ENCODE measurements at regions of chr2 and their contacts with region 1.

Region 1: GRCh38 chr2:231900486-231900942 is 25.7 kb downstream of the NPPC start:
- DNase-seq: peak; percentile 80
- H3K4me3 ChIP-seq: no peak overlapping the region
- H3K27ac ChIP-seq: no peak overlapping the region
- H3K4me1 ChIP-seq: no peaks in the 10 kb centered on the region
- H3K27me3 ChIP-seq: peaks cover 32% of the 10 kb centered on the region

Region 2: DNA sequence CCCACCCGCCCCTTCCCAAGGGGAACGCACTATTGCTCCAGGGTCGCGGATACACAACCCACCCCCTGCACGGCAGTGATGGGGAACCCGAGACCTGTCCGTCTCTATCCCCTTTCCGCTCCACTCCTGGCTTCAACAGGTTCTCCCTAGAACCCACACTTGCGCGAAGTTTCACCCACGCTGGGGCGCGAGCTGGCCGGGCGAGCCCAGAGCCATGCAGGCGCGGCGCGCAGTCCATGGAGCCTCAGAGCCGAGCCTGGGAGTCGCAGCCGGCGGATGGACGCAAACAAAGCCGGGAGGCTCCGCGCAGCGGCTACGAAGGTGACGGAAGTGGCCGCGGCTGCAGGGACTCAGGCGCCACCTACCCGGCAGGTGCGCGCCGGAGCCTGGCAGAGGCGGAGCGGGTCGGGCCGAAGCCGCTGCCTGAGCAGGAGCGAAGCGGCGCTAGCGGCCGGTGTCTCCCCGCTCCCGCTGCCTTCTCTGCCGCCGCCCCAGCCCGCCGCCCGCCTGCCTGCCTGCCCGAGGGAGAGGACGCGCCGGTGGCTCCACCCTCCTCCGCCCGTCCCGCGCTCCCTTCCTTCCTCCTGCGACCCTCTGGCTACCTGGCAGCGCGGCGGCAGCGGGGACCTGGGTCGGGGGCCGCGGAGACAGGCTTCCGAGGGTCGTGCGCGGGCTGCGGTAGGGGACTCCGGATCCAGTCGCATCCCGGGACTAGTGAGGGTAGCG is 520.1 kb after region 1 on chr2:
- in situ Hi-C with region 1: loop called (anchors 10 kb)
- DNase-seq: peak; percentile 42
- H3K4me3 ChIP-seq: peak overlapping the region; percentile 15; the same call in 1 of the 2 replicates
- H3K27ac ChIP-seq: no peak overlapping the region
- H3K4me1 ChIP-seq: no peaks in the 10 kb centered on the region
- H3K27me3 ChIP-seq: peaks cover 69% of the 10 kb centered on the region

Region 3: DNA sequence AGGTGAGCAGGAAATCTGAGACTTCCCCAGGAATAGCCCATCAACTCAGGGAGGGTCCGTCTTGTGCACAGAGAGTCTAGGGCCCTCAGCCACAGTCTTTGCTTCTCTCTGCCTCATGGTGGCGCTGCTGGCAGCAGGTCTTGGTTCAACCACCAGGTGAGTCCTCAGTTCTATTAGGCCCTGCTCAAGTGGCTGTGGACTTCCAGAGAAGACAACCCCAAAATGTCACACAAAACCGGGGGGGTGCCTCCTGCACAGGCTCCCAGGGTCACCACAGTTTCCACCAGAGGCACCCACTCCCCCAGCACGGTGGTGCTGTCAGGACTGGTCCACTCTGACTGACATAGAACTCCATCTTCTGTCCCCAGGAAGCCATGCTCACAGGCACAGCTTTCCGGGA is 636.6 kb after region 1 on chr2:
- in situ Hi-C with region 1: loop called (anchors 25 kb)
- DNase-seq: no peak
- H3K4me3 ChIP-seq: no peak overlapping the region
- H3K27ac ChIP-seq: no peak overlapping the region
- H3K4me1 ChIP-seq: no peaks in the 10 kb centered on the region
- H3K27me3 ChIP-seq: no peaks in the 10 kb centered on the region

Measured in GM23248 (cell line).